ENCODE measurements at regions of chr5 and their contacts with region 1.

Region 1: DNA sequence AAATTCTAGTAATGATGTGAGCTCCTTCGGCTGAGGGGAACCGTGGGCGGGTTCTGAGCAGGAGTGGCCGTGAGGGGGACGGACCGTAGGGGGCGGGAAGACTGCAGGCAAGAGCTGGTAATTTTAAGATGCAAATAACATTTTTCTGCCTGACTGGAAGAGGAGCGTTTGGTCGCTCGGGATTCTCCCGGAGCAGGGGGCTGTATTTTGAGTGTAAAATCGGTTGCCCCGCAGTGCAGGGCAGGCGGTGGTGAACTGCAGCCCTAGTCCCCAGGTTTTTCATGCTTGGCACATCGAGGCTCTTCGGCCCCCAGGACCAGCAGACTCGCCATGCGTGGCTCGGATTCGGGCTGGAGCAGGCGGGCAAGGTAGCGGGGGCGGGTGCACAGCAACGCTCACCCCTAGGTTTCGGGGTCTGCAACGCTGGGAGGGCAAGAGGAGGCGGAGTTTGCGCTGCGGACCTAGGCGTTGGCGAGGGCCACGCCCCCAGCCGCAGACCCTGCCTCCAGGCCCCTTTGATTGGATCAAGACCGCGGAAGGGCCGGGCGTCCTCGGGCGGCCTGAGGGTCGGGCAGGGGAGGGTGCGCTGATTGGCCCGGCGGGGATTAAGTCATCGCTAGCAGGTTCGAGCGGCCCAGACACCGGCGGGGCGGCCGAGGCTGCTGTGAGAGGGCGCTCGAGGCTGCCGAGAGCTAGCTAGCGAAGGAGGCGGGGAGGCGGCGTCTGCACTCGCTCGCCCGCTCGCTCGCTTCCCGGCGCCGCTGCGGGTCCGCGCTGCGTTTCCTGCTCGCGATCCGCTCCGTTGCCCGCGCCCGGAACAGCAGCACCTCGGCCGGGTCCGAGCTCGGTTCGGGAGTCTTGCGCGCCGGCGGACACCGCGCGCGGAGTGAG is at the start of gene ARHGAP26:
- DNase-seq: peak; percentile 98
- H3K4me3 Mint-ChIP-seq: peak within 1 kb of the TSS; percentile 94
- H3K27ac Mint-ChIP-seq: peak within 1 kb of the TSS; percentile 90
- H3K4me1 Mint-ChIP-seq: peaks cover 44% of the 10 kb centered on the region
- H3K27me3 Mint-ChIP-seq: peaks cover 3% of the 10 kb centered on the region
- total RNA-seq, gene ARHGAP26: 12.7 and 15.3 TPM in 2 replicates

Region 2: DNA sequence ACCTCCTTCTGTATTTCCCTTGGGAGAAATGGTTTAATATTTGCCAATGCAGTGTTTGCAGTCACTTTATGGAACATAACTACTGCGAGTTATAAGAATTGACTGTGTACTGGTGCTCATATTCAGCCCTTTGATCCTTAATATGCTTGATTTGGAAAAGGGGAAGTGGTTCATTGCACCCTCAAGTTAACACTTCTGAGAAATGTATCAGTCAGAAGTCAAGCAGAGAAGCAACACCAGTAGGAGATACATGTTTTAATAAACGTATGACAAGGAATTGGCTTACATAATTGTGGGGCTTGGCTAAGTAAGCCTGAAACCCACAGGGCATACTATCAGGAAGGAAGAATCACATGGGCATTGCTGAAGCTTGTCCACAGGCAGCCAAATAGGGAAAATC is 314.1 kb before region 1 on chr5:
- intact Hi-C with region 1: no loop called
- DNase-seq: no peak
- H3K4me3 Mint-ChIP-seq: no peak overlapping the region
- H3K27ac Mint-ChIP-seq: no peak overlapping the region
- H3K4me1 Mint-ChIP-seq: peaks cover 5% of the 10 kb centered on the region
- H3K27me3 Mint-ChIP-seq: peaks cover 7% of the 10 kb centered on the region

Region 3: GRCh38 chr5:142758056-142758795 is 11.8 kb before region 1 on chr5:
- intact Hi-C with region 1: loop called (anchors 1 kb)
- DNase-seq: no peak
- H3K4me3 Mint-ChIP-seq: no peak overlapping the region
- H3K27ac Mint-ChIP-seq: peak overlapping the region; percentile 12
- H3K4me1 Mint-ChIP-seq: peaks cover 13% of the 10 kb centered on the region
- H3K27me3 Mint-ChIP-seq: peaks cover 9% of the 10 kb centered on the region

Region 4: GRCh38 chr5:142800776-142801494 is 30.9 kb after region 1 on chr5:
- intact Hi-C with region 1: loop called (anchors 1 kb)
- DNase-seq: peak; percentile 87
- H3K4me3 Mint-ChIP-seq: peak overlapping the region; percentile 79
- H3K27ac Mint-ChIP-seq: peak overlapping the region; percentile 92
- H3K4me1 Mint-ChIP-seq: peaks cover 54% of the 10 kb centered on the region
- H3K27me3 Mint-ChIP-seq: no peaks in the 10 kb centered on the region

Region 5: GRCh38 chr5:142826741-142827732 is 57.1 kb after region 1 on chr5:
- intact Hi-C with region 1: loop called (anchors 1 kb)
- DNase-seq: peak; percentile 66
- H3K4me3 Mint-ChIP-seq: peak overlapping the region; percentile 32
- H3K27ac Mint-ChIP-seq: peak overlapping the region; percentile 77
- H3K4me1 Mint-ChIP-seq: peaks cover 63% of the 10 kb centered on the region
- H3K27me3 Mint-ChIP-seq: peaks cover 1% of the 10 kb centered on the region

Region 6: DNA sequence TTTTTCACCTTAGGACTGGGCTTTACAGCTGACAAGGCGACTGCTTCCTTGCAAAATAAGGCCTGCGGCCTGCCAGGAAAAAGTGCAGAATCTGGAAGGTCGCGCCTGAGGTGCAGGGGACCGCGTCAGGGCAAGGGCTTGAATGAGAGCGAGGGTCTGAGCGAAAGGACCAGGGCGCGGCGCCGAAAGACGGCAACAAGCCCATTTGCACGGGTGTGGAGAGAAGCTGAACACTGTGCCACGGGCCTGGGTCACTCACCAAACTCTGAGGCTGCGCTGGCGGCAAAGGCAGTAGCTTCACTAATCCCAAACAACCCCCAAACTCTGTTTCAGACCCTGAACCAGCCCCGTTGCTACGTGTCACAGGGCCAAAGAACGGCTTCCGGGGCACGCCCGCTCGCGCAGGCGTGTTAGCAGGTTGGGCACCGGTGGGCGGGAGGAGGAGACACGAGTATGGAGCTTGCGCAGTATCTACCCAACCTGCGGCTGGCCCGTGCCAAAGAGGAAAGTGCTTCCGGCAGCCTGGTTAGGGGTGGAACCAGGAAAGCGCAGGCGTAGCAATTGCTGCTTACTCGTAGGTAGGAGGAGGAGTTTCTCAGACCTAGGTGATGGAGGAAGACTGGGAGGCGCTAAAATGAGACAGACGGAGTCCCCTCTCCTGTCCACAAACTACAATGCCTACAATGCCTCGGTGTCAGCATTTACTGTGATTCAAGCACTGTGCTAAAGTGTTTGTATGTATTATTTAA is 1400.5 kb after region 1 on chr5 and contains the starts of genes KCTD16 and YIPF5:
- intact Hi-C with region 1: loop called (anchors 10 kb)
- DNase-seq: peak; percentile 99
- H3K4me3 Mint-ChIP-seq: peak within 1 kb of the TSS; percentile 99
- H3K27ac Mint-ChIP-seq: peak within 1 kb of the TSS; percentile 93
- H3K4me1 Mint-ChIP-seq: peaks cover 37% of the 10 kb centered on the region
- H3K27me3 Mint-ChIP-seq: peaks cover 16% of the 10 kb centered on the region
- total RNA-seq, gene KCTD16: not detected in 2 replicates
- total RNA-seq, gene YIPF5: 32.0 and 34.6 TPM in 2 replicates

Measured in activated CD4-positive, alpha-beta T cell treated with anti-CD3 and anti-CD28 coated beads, Interleukin-2, amount 10 ng/mL, durations not matched to agents 24 days and 14 days (primary cell).